Pancreas (tissue), 10 donors: ENCODE measurements at regions of chr2 and their contacts with region 1.

Region 1: GRCh38 chr2:96120092-96120720 is 3.8 kb upstream of the ADRA2B start:
- DNase-seq: no peak
- ATAC-seq: no peak
- H3K4me3 ChIP-seq: no peak overlapping the region
- H3K27ac ChIP-seq: no peak overlapping the region
- H3K4me1 ChIP-seq: peaks cover 0 to 5% (median 4%) of the 10 kb centered on the region in 3 donors
- H3K27me3 ChIP-seq: no peaks in the 10 kb centered on the region
- CTCF ChIP-seq: no peak

Region 2: DNA sequence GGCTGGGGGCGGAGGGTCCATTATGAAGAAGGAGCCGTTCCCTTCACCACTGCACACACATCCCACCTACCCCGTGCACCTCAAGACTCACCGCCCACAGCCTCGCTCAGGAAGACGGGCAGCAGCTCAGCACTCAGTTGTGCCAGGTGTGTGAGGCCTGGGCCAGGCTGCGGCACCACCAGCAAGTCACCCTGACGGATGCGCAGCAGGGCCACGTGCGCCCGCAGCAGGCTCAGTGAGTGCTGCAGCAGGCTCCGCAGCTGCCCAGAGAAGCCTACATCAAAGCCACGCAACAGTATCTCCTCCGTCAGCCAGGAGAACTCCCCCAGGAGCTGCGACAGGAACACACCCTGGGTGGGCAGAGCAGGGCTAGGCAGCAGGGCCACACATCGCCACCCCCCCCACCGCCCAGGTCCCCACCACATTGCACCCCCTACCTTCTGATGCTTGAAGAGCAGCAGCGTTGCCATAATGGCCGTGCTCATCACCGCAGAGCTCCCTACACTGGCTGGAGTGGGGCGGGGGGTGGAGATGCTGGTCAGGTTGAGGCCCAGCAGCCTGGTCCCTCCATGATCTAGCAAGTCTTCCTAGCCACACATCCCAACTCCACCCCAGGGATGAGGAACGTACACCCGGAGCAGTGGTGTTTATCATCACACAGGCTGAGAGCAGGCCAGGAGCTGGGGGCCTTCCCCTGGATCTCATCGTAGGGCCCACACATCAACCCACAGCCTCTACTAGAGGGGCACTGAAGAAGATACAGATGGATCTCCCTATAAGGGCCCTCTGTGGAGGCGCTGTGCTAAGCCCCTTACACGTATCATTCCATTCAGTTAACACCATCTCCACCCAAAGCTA is 95.6 kb before region 1 on chr2:
- intact Hi-C with region 1: loop called in 1 of 3 experiments (anchors 10 kb)
- DNase-seq: peak in 2 of 6 donors; percentile 50
- ATAC-seq: no peak
- H3K4me3 ChIP-seq: no peak overlapping the region
- H3K27ac ChIP-seq: no peak overlapping the region
- H3K4me1 ChIP-seq: no peaks in the 10 kb centered on the region
- H3K27me3 ChIP-seq: no peaks in the 10 kb centered on the region
- CTCF ChIP-seq: no peak